CD4-positive, alpha-beta memory T cell (primary cell): ENCODE measurements at regions of chr22 and their contacts with region 1.

Region 1: GRCh38 chr22:22753526-22754267 is 109.3 kb downstream of the GGTLC2 start:
- DNase-seq: peak; percentile 73 to 81 (median 77)
- H3K4me3 ChIP-seq: no peak overlapping the region
- H3K4me3 Mint-ChIP-seq: peak overlapping the region in 7 of 8 donors; percentile 50 to 89 (median 81)
- H3K27ac ChIP-seq: peak overlapping the region; percentile 30
- H3K27ac Mint-ChIP-seq: peak overlapping the region; percentile 80 to 94 (median 87)
- H3K4me1 ChIP-seq: peaks cover 47% of the 10 kb centered on the region
- H3K4me1 Mint-ChIP-seq: peaks cover 40 to 63% (median 52%) of the 10 kb centered on the region in 4 donors
- H3K27me3 ChIP-seq: no peaks in the 10 kb centered on the region
- H3K27me3 Mint-ChIP-seq: no peaks in the 10 kb centered on the region

Region 2: DNA sequence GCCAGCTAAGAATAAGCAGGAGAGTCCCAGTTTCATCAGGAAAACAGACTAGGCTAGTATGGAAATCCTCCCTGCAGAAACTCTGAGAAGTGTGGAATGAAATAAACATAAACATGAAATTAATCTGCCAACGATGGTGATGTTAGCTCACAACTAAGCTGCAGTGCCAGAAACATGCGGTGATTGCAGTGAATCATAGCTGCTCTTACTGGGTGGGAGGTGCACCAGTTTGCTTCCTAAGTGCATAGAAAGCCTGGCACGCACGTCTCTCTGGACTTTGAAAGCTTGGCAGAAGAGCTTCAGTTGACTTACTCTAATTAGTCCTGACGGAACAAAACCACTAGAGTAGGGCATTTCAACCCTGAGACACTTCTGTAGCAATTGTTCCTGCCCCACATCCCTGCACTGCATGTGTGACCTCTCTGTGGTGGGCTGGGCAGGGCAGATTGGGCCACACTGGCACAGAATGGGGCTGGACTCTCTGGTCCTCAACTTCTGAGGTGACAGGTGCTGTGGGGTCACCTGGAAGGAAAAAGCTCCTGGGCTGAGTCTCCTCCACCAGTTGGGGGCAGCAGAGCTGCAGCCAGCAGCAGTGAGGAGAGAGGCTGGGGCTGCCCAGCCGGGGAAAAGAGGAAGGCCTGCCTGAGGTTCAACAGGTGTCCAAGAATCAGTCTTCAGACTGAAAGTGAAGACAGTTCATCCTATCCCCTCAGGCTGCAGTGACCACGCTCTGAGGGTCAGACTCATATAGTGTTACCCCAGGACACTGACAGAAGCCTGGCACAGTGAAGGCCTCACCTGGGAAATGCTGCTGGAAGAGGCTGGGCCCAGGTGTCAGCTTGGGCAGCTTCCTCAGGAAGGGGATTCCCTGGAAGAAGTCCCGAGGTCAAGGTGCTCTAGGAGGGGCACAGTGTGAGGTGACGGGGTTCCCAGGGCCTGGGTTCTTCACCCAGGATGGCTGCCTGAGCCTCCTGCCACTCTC is 68.8 kb before region 1 on chr22:
- CTCF ChIA-PET with region 1: no interaction called
- POLR2A ChIA-PET with region 1: no interaction called
- intact Hi-C with region 1: no loop called
- DNase-seq: no peak
- H3K4me3 ChIP-seq: no peak overlapping the region
- H3K4me3 Mint-ChIP-seq: no peak overlapping the region
- H3K27ac ChIP-seq: no peak overlapping the region
- H3K27ac Mint-ChIP-seq: no peak overlapping the region
- H3K4me1 ChIP-seq: no peaks in the 10 kb centered on the region
- H3K4me1 Mint-ChIP-seq: no peaks in the 10 kb centered on the region
- H3K27me3 ChIP-seq: no peaks in the 10 kb centered on the region
- H3K27me3 Mint-ChIP-seq: no peaks in the 10 kb centered on the region

Region 3: GRCh38 chr22:22770280-22770871 is 16.7 kb after region 1 on chr22:
- CTCF ChIA-PET with region 1: interaction called, 138 read pairs
- POLR2A ChIA-PET with region 1: interaction called, 18 read pairs
- intact Hi-C with region 1: no loop called
- DNase-seq: peak; percentile 20 to 46 (median 30)
- H3K4me3 ChIP-seq: no peak overlapping the region
- H3K4me3 Mint-ChIP-seq: no peak overlapping the region
- H3K27ac ChIP-seq: no peak overlapping the region
- H3K27ac Mint-ChIP-seq: peak overlapping the region in 5 of 7 donors; percentile 2 to 72 (median 23)
- H3K4me1 ChIP-seq: no peaks in the 10 kb centered on the region
- H3K4me1 Mint-ChIP-seq: peaks cover 10 to 28% (median 19%) of the 10 kb centered on the region in 4 donors
- H3K27me3 ChIP-seq: no peaks in the 10 kb centered on the region
- H3K27me3 Mint-ChIP-seq: peaks cover 3 to 4% of the 10 kb centered on the region in 2 donors

Region 4: GRCh38 chr22:22810018-22810427 is 56.3 kb after region 1 on chr22:
- CTCF ChIA-PET with region 1: interaction called, 118 read pairs
- POLR2A ChIA-PET with region 1: interaction called, 67 read pairs
- intact Hi-C with region 1: no loop called
- DNase-seq: peak; percentile 76 to 82 (median 76)
- H3K4me3 ChIP-seq: no peak overlapping the region
- H3K4me3 Mint-ChIP-seq: peak overlapping the region in 4 of 8 donors; percentile 12 to 53 (median 44)
- H3K27ac ChIP-seq: no peak overlapping the region
- H3K27ac Mint-ChIP-seq: peak overlapping the region in 6 of 7 donors; percentile 67 to 91 (median 80)
- H3K4me1 ChIP-seq: peaks cover 26% of the 10 kb centered on the region
- H3K4me1 Mint-ChIP-seq: peaks cover 40 to 79% (median 57%) of the 10 kb centered on the region in 4 donors
- H3K27me3 ChIP-seq: no peaks in the 10 kb centered on the region
- H3K27me3 Mint-ChIP-seq: no peaks in the 10 kb centered on the region

Region 5: DNA sequence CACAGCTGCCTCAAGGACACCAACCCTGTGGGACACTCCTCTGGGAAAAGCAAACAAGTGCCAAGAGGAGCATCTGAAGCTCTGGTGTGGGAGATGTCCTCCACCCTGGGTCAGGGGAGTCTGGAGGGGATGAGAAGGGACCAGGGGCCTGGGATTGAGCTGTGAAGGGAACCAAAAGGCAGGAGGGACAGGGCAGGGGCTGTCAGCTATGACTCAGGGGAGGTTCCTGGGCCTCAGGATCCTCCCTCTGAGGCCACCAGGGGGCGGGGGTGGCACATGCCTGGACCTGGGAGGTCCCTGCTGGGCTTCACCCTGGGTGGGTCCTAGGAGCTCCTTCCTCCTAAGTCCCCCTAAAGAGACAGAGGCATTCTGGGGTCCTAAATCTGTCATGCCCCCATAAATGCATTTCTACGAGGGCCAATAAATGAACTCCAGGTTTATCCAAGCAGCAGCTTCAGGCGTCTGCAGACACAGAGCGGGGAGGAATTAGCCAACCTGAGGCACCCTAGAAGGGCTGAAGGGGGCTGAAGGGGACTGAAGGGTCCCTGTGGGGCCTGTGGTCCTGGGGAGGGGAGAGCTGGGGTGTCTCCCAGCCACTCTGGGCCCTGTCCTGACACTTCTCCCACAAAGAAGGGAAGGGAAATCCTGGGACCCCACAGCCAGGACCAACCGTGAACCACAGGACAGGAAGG is 102.1 kb after region 1 on chr22:
- CTCF ChIA-PET with region 1: interaction called, 48 read pairs
- POLR2A ChIA-PET with region 1: interaction called, 11 read pairs
- intact Hi-C with region 1: no loop called
- DNase-seq: peak in 4 of 5 donors; percentile 11 to 25 (median 16)
- H3K4me3 ChIP-seq: no peak overlapping the region
- H3K4me3 Mint-ChIP-seq: no peak overlapping the region
- H3K27ac ChIP-seq: no peak overlapping the region
- H3K27ac Mint-ChIP-seq: peak overlapping the region in 4 of 7 donors; percentile 1 to 74 (median 53)
- H3K4me1 ChIP-seq: no peaks in the 10 kb centered on the region
- H3K4me1 Mint-ChIP-seq: peaks cover 3 to 11% (median 5%) of the 10 kb centered on the region in 4 donors
- H3K27me3 ChIP-seq: no peaks in the 10 kb centered on the region
- H3K27me3 Mint-ChIP-seq: peaks cover 0 to 1% of the 10 kb centered on the region in 2 donors

Region 6: GRCh38 chr22:22959147-22959827 is 205.6 kb after region 1 on chr22:
- CTCF ChIA-PET with region 1: interaction called, 28 read pairs
- POLR2A ChIA-PET with region 1: no interaction called
- intact Hi-C with region 1: loop called (anchors 1 kb)
- DNase-seq: peak; percentile 59 to 76 (median 68)
- H3K4me3 ChIP-seq: no peak overlapping the region
- H3K4me3 Mint-ChIP-seq: no peak overlapping the region
- H3K27ac ChIP-seq: no peak overlapping the region
- H3K27ac Mint-ChIP-seq: peak overlapping the region in 1 of 7 donors; percentile 29
- H3K4me1 ChIP-seq: no peaks in the 10 kb centered on the region
- H3K4me1 Mint-ChIP-seq: peaks cover 0 to 4% (median 2%) of the 10 kb centered on the region in 4 donors
- H3K27me3 ChIP-seq: no peaks in the 10 kb centered on the region
- H3K27me3 Mint-ChIP-seq: peaks cover 11 to 18% of the 10 kb centered on the region in 2 donors